WTC11 (cell line): ENCODE measurements at regions of chr17 and their contacts with region 1.

Region 1: DNA sequence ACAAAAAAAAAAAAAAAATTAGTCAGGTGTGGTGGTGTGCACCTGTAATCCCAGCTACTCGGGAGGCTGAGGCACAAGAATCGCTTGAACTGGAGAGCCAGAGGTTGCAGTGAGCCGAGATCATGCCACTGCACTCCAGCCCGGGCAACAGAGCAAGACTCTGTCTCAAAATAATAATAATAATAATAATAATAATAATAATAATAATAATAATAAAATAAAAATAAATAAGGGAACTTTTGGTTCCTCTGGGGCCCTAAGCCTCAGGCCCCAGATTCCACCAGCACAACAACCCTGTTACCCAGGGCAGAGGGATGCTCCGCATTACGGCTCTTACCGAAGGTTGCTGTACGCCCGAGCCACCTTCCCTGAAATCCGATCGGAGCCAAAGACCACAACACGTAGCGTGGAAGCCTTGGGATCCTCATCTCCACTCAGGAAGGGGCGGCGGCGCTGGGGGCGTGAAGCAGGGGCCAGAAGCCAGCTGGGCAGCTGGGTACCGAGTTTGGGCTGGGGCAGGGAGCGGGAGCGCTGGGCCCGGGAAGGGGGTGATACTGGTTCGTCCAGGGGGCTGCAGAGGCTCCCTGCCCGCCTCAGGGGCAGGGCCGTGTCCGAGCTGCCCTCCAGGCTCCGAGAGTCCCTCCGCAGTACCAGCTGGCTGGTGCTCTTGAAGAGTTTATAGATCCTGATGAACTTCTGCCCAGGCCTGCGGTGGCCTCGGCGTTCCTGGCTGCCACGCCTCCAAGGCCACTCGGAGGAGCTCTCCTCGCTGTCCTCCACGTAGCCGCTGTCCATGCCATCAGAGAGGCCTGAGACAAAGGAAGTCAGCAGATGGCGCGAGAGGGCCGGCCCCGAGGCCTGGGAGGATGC is 20.6 kb upstream of the PIK3R6 start:
- DNase-seq: peak; percentile 89
- ATAC-seq: peak; percentile 82
- H3K4me3 Mint-ChIP-seq: no peak overlapping the region
- H3K27ac Mint-ChIP-seq: no peak overlapping the region
- H3K4me1 Mint-ChIP-seq: no peaks in the 10 kb centered on the region; the same call in 1 of the 2 replicates
- H3K27me3 Mint-ChIP-seq: no peaks in the 10 kb centered on the region; the same call in 1 of the 2 replicates
- CTCF ChIP-seq: no peak

Region 2: GRCh38 chr17:8727065-8727511 is 161.0 kb before region 1 on chr17:
- CTCF ChIA-PET with region 1: no interaction called
- POLR2A ChIA-PET with region 1: no interaction called
- DNase-seq: no peak
- ATAC-seq: no peak
- H3K4me3 Mint-ChIP-seq: no peak overlapping the region
- H3K27ac Mint-ChIP-seq: no peak overlapping the region
- H3K4me1 Mint-ChIP-seq: peaks cover 2% of the 10 kb centered on the region; the same call in 1 of the 2 replicates
- H3K27me3 Mint-ChIP-seq: no peaks in the 10 kb centered on the region; the same call in 1 of the 2 replicates
- CTCF ChIP-seq: no peak

Region 3: DNA sequence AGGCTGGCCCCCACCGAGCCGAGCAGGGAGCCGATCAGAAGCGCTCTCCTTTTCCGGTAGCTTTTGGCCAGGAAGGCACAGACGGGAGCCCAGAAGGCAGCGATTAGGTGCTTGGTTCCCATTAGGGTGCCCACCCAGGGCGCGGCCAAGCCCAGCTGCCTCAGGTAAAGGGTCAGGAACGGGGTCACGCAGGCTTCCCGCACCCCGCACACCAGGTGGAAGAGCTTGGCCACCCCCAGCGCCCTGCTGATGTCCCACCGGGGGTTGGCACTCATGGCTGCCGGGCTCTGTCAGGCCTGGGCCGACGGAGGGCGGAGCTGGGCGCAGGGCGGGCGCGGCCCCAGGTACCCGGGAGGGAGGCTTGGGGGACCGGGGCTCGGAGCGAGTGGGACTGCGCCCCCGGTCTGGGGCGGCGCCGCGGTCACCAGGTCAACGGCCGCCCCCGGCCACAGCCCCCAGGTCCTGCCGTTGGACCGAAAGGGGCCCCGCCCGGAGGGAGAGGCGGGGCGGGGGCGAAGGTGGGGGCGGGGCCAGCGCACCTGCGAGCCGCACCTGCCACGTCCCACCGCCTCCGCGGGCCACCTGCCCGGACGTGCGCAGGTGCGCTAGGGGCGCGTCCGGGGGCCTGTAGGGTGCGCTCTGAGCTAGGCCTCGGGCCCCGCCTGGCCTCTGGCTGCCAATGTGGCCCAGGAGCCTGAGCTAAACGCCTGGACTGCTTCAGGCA is 89.1 kb before region 1 on chr17 and contains the start of gene MFSD6L:
- CTCF ChIA-PET with region 1: interaction called, 64 read pairs
- POLR2A ChIA-PET with region 1: interaction called, 7 read pairs
- DNase-seq: peak; percentile 88
- ATAC-seq: peak; percentile 96
- H3K4me3 Mint-ChIP-seq: peak within 1 kb of the TSS; percentile 81
- H3K27ac Mint-ChIP-seq: peak within 1 kb of the TSS; percentile 27; the same call in 1 of the 2 replicates
- H3K4me1 Mint-ChIP-seq: peaks cover 23% of the 10 kb centered on the region
- H3K27me3 Mint-ChIP-seq: peaks cover 4% of the 10 kb centered on the region; the same call in 1 of the 2 replicates
- CTCF ChIP-seq: no peak
- total RNA-seq, gene MFSD6L: 4.0 to 5.2 TPM (median 4.5 TPM) in 3 replicates

Region 4: GRCh38 chr17:8806926-8807550 is 81.0 kb before region 1 on chr17:
- CTCF ChIA-PET with region 1: interaction called, 11 read pairs
- POLR2A ChIA-PET with region 1: no interaction called
- DNase-seq: no peak
- ATAC-seq: no peak
- H3K4me3 Mint-ChIP-seq: no peak overlapping the region
- H3K27ac Mint-ChIP-seq: 0 out of 2 replicates have a peak overlapping the region, but pooled peaks have one; percentile 0
- H3K4me1 Mint-ChIP-seq: peaks cover 13% of the 10 kb centered on the region
- H3K27me3 Mint-ChIP-seq: no peaks in the 10 kb centered on the region; the same call in 1 of the 2 replicates
- CTCF ChIP-seq: no peak

Region 5: DNA sequence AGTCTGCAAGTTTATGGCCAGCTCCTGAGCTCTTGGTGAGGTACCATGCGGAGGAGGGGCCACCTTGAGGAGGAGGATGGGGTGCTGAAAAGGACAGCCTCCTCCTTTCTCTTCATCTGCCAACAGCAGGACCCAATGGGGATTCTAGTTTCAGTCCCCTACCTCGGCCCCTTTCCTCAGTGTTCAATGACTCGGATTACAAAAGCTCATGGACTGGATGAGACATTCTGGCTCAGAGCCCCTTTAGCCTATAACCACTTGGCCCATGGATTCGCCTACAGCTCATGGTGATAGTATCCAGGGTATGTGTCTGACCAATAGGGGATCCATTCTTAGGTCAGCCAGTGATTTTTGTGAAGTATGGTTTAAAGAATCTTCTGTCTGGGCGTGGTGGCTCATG is 12.1 kb before region 1 on chr17:
- CTCF ChIA-PET with region 1: interaction called, 13 read pairs
- POLR2A ChIA-PET with region 1: no interaction called
- DNase-seq: no peak
- ATAC-seq: peak; percentile 25; the same call in 1 of the 2 replicates
- H3K4me3 Mint-ChIP-seq: no peak overlapping the region
- H3K27ac Mint-ChIP-seq: no peak overlapping the region
- H3K4me1 Mint-ChIP-seq: peaks cover 33% of the 10 kb centered on the region
- H3K27me3 Mint-ChIP-seq: no peaks in the 10 kb centered on the region
- CTCF ChIP-seq: no peak

Region 6: DNA sequence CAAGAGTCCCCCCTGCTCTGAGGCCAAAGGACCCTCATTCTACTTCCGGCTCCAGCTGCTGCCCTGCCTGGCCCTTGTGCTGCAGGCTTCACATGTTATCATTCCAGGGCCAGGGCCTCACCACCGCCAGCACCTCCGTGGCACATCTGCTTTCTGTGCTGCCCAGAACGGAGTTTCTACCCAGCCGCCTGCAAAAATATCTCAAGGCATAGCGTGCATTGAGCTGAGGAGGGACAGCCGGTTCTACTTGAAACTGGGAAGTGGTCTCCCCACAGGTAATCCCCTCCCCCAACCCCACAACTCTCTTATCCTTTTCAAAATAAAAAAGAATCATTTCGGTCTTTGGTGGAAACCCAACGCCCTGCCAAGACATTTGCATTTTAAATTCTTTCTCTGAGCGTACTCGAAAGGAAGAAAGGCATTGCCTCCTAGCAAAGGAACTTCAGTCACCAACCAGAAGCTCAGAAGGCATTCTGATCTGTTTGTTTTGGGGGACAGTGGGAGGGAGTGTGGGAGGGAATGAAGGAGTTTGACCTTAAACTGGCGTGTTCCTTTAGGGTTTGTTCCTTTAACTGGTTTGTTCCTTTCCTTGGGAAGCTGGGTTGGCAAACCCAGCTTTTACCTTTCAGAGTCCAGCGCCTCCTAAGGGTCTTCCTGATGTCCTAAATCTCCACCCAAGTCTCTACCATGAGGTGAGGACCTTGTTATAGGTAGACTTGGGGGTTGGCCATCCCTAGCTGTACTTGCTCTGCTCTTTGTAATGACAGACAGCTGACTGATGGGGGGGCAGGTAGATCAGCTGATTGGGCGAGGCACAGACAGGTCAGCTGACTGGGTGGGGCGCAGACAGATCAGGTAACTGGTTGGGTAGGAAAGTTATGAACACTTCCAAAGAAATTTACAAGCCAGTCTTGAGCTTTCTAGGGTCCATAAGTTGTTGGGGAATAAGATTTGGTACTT is 12.8 kb after region 1 on chr17:
- CTCF ChIA-PET with region 1: interaction called, 59 read pairs
- POLR2A ChIA-PET with region 1: no interaction called
- DNase-seq: no peak
- ATAC-seq: peak; percentile 32; the same call in 1 of the 2 replicates
- H3K4me3 Mint-ChIP-seq: peak overlapping the region; percentile 24
- H3K27ac Mint-ChIP-seq: no peak overlapping the region; the same call in 1 of the 2 replicates
- H3K4me1 Mint-ChIP-seq: peaks cover 22% of the 10 kb centered on the region
- H3K27me3 Mint-ChIP-seq: no peaks in the 10 kb centered on the region; the same call in 1 of the 2 replicates
- CTCF ChIP-seq: no peak

Region 7: DNA sequence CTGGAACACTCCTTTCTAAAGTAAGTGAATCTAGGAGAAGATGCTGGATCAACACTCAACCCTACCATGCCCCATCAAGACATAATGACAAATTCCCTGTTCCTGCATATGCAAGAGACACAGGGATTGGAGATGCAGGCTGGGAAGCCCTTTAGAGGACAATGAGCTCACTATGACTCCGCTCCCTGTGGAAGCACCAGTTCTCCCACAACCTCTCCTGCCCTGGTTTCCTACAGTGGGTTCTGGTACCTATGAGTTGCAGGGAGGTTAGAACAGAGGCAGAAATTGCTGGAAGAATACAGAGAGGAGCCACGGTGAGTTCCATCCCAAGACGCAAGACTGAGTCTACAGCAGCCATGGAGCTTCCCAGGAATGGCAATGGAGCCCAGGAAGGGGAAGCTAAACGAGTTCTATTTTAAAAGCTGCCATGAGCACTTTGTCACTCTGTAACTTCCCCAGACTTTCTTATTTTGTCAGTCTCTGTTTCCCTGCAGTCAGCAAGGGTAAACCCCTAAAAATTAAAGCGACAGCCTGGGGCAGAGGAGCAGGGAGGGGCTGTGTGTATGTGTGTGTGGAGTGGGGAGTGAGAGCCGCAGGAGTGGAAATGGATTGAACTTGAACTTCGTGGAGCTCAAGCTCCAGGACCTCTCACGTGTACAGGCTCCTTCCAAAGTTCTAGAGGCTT is 21.7 kb after region 1 on chr17:
- CTCF ChIA-PET with region 1: interaction called, 15 read pairs
- POLR2A ChIA-PET with region 1: no interaction called
- DNase-seq: no peak
- ATAC-seq: no peak
- H3K4me3 Mint-ChIP-seq: no peak overlapping the region
- H3K27ac Mint-ChIP-seq: no peak overlapping the region
- H3K4me1 Mint-ChIP-seq: no peaks in the 10 kb centered on the region
- H3K27me3 Mint-ChIP-seq: no peaks in the 10 kb centered on the region; the same call in 1 of the 2 replicates
- CTCF ChIP-seq: no peak

Region 8: GRCh38 chr17:8965394-8966168 is 77.5 kb after region 1 on chr17 and contains the start of gene PIK3R5:
- CTCF ChIA-PET with region 1: interaction called, 18 read pairs
- POLR2A ChIA-PET with region 1: no interaction called
- DNase-seq: peak; percentile 92
- ATAC-seq: peak; percentile 95
- H3K4me3 Mint-ChIP-seq: peak within 1 kb of the TSS; percentile 70
- H3K27ac Mint-ChIP-seq: no peak within 1 kb of the TSS
- H3K4me1 Mint-ChIP-seq: peaks cover 9% of the 10 kb centered on the region
- H3K27me3 Mint-ChIP-seq: peaks cover 53% of the 10 kb centered on the region
- CTCF ChIP-seq: no peak
- total RNA-seq, gene PIK3R5: 5.9 to 7.5 TPM (median 5.9 TPM) in 3 replicates